KBM-7 (cell line): ENCODE measurements at regions of chr17 and their contacts with region 1.

Region 1: DNA sequence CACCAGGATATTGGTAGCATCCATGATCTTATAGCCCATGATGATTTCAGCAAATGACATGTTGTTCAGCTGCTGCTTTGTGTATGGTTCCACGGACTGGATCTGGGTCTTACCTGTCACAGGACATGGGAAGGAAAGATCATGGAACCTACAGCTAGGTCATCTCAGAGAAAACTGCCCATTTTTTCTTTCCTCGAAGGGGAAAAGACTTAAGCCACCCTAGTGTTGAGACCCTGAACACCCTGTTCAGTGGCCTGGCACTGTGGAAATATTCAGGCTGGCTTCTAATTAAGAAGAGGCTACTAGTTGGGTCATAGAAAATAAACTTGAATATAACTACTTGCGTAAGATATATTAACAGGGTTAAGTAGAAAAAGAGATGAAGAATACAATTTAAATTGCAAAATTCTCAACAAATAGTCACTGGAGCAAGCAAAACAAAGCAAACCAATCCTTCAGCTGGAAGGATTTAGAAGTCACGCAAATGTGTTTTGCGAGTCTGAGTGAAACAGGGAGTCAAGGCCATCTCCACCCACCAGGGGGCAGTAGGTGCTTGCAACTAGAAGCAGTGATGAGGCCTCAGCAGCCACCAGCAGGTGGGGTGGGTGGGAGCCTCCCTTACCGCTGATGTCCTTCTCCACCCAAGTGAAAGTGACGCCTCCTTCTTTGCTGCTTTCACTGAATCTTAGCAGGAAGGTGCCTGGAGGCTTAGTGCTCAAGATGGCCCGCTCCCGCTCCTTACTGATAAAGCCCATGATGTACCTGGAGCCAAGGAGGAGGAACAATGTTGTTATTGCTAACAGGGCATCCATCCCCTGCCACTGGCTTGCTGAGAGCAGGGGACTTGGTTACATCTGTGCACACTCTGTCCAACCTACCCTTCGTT is 34.3 kb downstream of the STAT5A start:
- DNase-seq: peak; percentile 96

Region 2: GRCh38 chr17:42163113-42163512 is 159.5 kb before region 1 on chr17:
- in situ Hi-C with region 1: no loop called
- DNase-seq: peak; percentile 54

Region 3: DNA sequence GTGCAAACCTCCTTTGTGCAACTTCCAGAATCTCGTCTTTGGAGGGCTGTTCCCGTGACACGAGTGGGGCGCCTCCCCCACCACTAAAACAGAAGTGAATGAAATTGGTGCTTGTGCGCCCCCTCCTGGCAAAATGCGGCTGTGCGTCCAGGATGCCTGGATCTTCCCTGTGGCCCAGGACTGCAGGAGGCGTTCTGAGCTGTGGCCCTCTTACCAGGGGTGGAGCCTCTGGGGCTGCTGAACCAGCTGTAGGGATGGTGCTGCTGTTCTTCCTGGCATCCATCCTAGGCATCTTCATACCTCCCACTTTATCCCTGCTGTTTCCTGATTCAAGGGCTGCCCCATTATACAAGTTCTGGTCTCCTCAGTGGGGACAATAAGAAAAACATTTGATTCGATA is 194.9 kb after region 1 on chr17:
- in situ Hi-C with region 1: loop called (anchors 25 kb)
- DNase-seq: peak; percentile 91